ENCODE measurements at regions of chr20 and their contacts with region 1.

Region 1: GRCh38 chr20:44310664-44311639 is at the start of gene FITM2:
- DNase-seq: peak; percentile 68
- H3K4me3 ChIP-seq: peak within 1 kb of the TSS; percentile 59
- H3K27me3 ChIP-seq: no peaks in the 10 kb centered on the region
- CTCF ChIP-seq: peak; percentile 99
- polyA plus RNA-seq, gene FITM2: 3.8 and 6.7 TPM in 2 replicates

Region 2: DNA sequence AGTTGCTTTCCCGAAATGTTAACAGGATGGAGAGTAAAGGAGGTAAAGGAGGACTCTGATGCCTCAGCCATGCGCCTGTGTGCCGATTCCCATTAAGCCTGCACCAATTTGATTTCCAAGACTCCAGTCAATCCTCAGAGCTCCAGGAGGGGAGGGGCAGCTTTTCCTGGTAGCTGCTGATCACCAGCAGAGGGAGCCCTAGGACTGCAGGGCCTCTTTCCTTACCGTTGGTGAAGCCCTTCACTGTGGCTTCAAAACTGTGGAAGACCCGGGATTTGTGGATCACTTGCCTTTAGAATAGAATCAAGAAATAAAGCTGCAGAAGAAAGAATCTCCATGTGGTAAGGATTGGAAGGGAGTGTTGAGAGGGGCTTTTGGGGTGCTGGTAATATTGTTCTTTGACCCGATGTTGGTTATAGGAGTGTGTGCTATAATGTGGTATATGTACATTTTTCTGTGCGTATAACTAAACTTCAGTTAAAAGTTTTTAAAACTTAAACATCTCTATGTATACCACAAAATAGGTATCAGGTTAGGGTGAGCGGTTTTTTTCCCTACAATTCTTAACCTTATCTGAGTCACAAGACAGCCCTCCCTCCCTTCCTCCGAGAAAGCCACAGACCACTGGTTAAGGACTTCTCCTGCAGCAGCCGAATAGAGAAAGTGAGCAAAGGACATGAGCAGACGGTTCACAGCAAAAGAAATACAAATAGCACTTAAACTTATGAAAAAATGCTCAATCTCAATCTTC is 93.4 kb before region 1 on chr20:
- CTCF ChIA-PET with region 1: interaction called, 203 read pairs
- POLR2A ChIA-PET with region 1: no interaction called
- DNase-seq: no peak
- H3K4me3 ChIP-seq: no peak overlapping the region
- H3K27me3 ChIP-seq: no peaks in the 10 kb centered on the region
- CTCF ChIP-seq: peak; percentile 96

Region 3: DNA sequence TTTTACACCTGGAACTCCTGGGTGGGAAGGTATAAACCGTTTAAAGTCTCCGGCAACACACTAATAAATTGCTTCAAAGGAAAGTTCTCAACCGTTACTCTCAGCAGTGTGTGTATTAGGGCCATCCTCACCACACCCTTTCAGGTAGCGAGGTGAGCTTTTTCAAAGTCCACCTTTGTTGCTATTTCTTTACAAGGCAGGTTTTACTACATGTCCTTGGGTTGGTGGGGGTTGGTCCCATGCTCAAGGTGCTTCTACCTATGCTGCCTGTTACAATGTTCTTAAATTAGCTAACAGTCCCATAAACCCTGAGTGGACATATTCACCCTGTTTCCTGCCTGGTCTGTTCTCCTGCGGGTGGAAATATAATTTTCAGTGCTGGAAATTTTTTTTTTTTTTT is 87.2 kb before region 1 on chr20:
- CTCF ChIA-PET with region 1: interaction called, 203 read pairs
- POLR2A ChIA-PET with region 1: no interaction called
- DNase-seq: no peak
- H3K4me3 ChIP-seq: no peak overlapping the region
- H3K27me3 ChIP-seq: no peaks in the 10 kb centered on the region
- CTCF ChIP-seq: no peak

Region 4: GRCh38 chr20:44326391-44327159 is 15.6 kb after region 1 on chr20:
- CTCF ChIA-PET with region 1: interaction called, 28 read pairs
- POLR2A ChIA-PET with region 1: no interaction called
- DNase-seq: no peak
- H3K4me3 ChIP-seq: peak overlapping the region; percentile 20
- H3K27me3 ChIP-seq: peaks cover 2% of the 10 kb centered on the region; the same call in 1 of the 2 replicates
- CTCF ChIP-seq: 0 out of 2 replicates have a peak, but pooled peaks have one; percentile 9

Region 5: GRCh38 chr20:44422083-44422482 is 111.1 kb after region 1 on chr20:
- CTCF ChIA-PET with region 1: no interaction called
- POLR2A ChIA-PET with region 1: no interaction called
- DNase-seq: no peak
- H3K4me3 ChIP-seq: no peak overlapping the region
- H3K27me3 ChIP-seq: 0 out of 2 replicates have a peak, but pooled peaks cover 1% of the 10 kb centered on the region
- CTCF ChIP-seq: no peak

Region 6: DNA sequence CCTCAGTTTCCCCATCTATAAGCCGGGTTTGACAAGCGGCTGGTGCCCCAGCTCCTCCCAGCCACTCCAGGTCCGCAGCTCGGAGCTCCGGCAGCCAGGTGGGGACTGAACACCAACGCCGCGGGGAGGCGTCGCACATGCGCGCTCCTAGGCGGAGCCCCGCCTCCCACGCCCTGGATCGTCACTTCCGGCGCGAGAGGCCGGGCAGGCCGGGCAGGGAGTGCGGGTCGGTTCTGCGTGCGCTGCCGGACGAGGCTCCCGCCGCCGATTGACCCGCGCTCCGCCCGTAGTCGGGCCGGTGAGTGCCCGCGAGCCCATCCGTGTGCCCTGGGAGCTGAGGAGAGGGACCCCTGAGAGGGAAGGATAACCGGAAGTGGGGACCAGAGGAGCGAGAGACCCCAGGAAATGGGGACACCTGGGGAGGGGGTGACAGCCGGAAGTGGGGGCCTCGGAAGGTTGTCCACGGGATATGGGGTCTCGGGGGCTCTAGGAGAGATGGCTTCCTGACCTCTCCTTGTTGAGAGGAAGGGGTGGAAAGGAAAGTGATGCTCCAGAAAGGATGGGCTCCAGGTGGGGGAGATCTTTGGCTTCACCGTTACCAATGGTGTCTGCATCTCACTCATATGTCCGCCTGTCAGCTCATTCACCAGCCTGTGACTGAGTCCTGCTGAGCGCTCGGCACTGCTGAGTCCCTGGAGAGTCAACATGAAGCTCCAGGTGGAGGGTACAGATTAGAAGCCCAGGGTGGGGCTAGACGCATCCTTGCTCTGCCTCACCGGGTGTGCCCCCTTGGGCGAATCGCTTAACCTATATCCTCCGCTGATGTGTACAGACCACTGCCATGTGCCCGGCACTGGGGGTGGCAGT is 165.0 kb after region 1 on chr20 and contains the start of gene TTPAL:
- CTCF ChIA-PET with region 1: interaction called, 16 read pairs
- POLR2A ChIA-PET with region 1: no interaction called
- DNase-seq: peak; percentile 19
- H3K4me3 ChIP-seq: peak within 1 kb of the TSS; percentile 68
- H3K27me3 ChIP-seq: no peaks in the 10 kb centered on the region
- CTCF ChIP-seq: peak; percentile 54
- polyA plus RNA-seq, gene TTPAL: 9.4 and 13.8 TPM in 2 replicates

Region 7: DNA sequence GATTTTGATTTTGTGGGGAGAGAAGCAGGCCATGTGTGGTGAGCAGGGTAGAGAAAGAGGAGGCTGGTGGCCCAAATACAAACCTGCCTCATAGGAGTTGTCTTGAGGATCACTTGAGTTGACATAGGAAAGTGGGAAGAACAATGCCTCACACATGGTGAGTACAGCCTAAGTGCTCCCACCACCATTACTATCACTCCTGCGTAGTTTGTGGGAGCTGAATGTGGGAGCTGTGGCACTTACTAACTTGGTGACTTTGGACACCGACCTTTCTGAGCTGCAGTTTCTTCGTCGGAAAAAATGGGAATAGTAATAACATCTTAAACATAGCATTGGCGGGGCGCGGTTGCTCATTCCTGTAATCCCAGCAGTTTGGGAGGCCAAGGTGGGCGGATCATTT is 236.5 kb after region 1 on chr20:
- CTCF ChIA-PET with region 1: no interaction called
- POLR2A ChIA-PET with region 1: no interaction called
- DNase-seq: no peak
- H3K4me3 ChIP-seq: no peak overlapping the region
- H3K27me3 ChIP-seq: no peaks in the 10 kb centered on the region
- CTCF ChIP-seq: no peak

Measured in BJ (cell line).